Common myeloid progenitor, CD34-positive (primary cell): ENCODE measurements at regions of chr10 and their contacts with region 1.

Region 1: DNA sequence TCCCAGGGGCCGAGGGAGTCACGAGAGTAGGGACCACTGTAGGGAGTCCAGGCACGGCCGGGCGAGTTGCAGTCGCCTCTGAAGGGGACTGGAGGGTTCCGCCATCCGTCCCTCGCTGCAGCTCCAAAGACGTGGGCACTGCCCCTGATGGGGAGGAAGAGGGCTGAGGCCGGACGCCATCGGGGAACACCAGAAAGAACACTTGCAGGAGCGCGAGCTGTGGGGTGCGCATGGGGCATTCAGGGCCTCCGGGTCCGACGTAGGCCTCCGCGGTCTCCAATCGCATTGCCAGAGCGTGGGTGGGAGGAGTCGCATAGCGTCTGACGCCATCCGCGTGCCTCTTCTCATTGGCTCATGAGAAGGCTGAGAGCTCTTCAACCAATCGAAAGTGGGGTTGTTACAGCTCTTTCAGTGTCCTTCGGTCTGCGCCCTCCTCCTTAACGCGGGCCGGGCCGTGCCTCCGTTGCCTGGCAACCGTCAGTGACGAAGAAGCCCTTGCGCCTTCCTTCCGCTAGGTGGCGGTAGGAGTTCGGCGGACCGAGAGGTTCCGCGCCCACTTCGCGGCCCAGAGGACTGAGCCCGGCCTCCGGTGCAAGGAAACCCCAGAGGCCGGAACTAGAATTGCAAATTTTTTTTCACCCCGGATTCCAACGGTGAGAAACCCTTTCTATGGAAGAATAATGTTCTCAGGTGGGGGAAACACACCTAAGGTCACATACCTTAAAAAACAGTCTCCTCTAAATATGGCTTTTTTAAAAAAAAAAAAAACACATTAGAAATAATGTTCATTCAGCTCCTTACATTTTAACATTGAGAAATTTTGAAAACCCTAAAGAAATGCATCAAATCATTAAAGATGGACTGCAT is at the start of gene TCTN3:
- DNase-seq: peak; percentile 100
- H3K4me3 ChIP-seq: peak within 1 kb of the TSS; percentile 78 to 96 (median 90)
- H3K27ac ChIP-seq: peak within 1 kb of the TSS; percentile 83 to 92
- H3K4me1 ChIP-seq: peaks cover 7 to 27% (median 13%) of the 10 kb centered on the region in 4 experiments
- H3K27me3 ChIP-seq: no peaks in the 10 kb centered on the region

Region 2: GRCh38 chr10:95832216-95833041 is 138.5 kb after region 1 on chr10:
- CTCF ChIA-PET with region 1: interaction called, 16 read pairs
- POLR2A ChIA-PET with region 1: no interaction called
- DNase-seq: peak; percentile 66 to 95 (median 90)
- H3K4me3 ChIP-seq: no peak overlapping the region
- H3K27ac ChIP-seq: peak overlapping the region; percentile 9 to 58
- H3K4me1 ChIP-seq: peaks cover 0 to 8% (median 5%) of the 10 kb centered on the region in 4 experiments
- H3K27me3 ChIP-seq: no peaks in the 10 kb centered on the region

Region 3: GRCh38 chr10:95841661-95842498 is 148.0 kb after region 1 on chr10:
- CTCF ChIA-PET with region 1: interaction called, 110 read pairs
- POLR2A ChIA-PET with region 1: no interaction called
- DNase-seq: peak; percentile 70 to 85 (median 76)
- H3K4me3 ChIP-seq: peak overlapping the region in 2 of 7 experiments; percentile 10 to 43
- H3K27ac ChIP-seq: peak overlapping the region in 1 of 2 experiments; percentile 65
- H3K4me1 ChIP-seq: peaks cover 0 to 13% (median 8%) of the 10 kb centered on the region in 4 experiments
- H3K27me3 ChIP-seq: no peaks in the 10 kb centered on the region

Region 4: DNA sequence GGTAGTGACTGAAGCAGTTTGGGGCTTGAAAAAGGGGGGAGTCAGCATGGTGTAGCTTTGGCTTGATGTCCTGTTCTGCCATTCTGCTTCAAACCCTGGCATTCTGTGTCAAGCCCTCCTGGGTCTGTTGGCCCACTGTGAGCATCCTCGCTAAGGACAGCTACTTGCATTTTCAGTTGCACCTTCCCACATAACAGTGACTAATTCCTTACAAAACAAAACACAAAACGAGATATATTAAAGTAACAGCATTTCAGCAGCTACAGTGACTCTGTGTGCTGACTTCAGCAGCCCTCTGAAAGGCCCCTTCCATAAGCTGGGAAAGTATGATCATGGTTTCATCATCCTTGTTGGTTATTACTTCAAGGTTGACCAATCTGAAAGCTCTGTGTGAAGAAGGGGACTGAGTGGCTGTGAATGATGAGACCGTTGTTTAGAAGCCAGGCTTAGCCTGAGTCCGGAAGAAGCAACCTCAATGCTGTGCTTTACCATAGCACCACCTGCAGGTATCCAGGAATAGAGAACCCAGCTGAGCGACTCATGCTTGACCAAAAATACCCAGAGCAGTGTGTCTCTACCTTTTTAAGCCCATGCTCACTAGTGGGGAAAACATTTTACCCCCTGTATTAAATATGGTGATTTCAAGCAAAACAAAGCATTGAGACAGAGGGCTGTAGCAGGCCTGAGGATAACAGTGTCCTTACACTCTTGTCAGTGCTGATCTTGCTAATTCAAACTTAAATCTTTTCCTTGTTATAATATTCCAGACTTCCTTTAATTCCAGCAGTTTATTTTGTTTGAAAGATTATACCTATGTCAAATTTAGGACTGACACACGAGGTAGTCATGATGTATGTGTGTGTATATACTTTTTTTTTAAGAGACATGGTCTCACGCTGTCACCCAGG is 171.3 kb after region 1 on chr10:
- CTCF ChIA-PET with region 1: interaction called, 45 read pairs
- POLR2A ChIA-PET with region 1: no interaction called
- DNase-seq: peak; percentile 63 to 87 (median 84)
- H3K4me3 ChIP-seq: no peak overlapping the region
- H3K27ac ChIP-seq: no peak overlapping the region
- H3K4me1 ChIP-seq: peaks cover 0 to 14% (median 0%) of the 10 kb centered on the region in 4 experiments
- H3K27me3 ChIP-seq: no peaks in the 10 kb centered on the region

Region 5: DNA sequence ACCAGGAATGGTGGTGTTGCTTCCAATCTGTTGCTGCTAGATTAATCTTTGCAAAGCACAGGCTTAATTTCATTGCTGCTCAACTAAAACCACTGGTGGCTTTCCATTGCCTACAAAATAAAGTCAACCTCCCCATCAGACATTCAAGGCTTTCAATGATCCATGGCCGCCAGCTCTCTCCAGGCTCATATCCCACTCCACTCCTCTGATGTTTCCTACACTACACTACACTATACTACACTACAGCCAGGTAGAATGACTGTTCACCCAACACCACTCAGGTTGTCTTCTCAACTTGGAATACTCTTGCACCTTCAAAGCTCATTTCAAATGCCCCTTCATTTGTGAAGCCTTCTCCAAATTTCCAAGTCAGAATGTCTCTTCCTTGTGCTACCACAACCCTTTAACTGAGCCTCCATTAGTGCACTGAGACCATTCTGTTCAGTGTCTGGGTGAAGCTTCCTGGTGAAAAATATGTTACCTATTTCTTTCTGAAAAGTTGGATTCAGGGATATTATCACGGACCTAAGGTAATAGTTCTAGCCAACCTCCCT is 178.3 kb after region 1 on chr10:
- CTCF ChIA-PET with region 1: interaction called, 10 read pairs
- POLR2A ChIA-PET with region 1: no interaction called
- DNase-seq: no peak
- H3K4me3 ChIP-seq: no peak overlapping the region
- H3K27ac ChIP-seq: no peak overlapping the region
- H3K4me1 ChIP-seq: no peaks in the 10 kb centered on the region
- H3K27me3 ChIP-seq: no peaks in the 10 kb centered on the region